ENCODE measurements at regions of chr2 and their contacts with region 1.

Region 1: DNA sequence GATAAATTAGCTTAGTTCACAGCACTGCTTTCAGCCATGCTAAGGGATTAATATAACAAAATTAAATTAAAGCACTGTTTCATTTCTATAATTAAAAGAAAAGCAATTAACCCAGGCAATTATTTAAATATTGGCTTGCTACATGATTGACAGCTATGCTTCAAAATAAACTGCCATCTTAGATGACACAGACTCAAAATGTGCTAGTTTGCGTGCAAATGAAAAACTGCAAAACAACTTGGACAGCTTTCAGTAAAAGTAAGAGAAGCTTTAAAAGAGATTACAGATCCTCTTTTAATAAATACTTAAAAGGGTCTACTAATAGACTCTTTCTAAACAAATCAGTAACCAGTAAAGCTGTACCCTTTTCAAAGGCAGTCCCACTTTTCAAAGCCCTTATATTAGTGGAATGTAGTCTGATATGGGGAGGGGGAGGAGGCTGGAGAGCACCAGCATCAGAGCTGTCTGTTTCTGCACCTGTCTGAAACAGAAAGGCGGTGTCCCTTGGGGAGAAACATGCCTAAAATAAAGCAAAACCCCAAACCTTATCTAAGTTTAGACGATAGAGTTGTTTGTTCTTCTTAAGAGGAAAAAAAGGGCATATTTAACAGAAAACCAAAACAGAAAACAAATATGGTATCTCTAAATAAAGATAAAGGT is 20.8 kb downstream of the EIF2AK3 start:
- DNase-seq: peak; percentile 68
- ATAC-seq: peak; percentile 87
- H3K4me3 ChIP-seq: no peak overlapping the region
- H3K27ac ChIP-seq: peak overlapping the region; percentile 66
- H3K4me1 ChIP-seq: peaks cover 51% of the 10 kb centered on the region
- H3K27me3 ChIP-seq: no peaks in the 10 kb centered on the region
- CTCF ChIP-seq: no peak
- EP300 ChIP-seq: peak in 1 of 2 experiments; percentile 99; a peak in 3 of 4 replicates
- POLR2A ChIP-seq: no peak
- RAD21 ChIP-seq: no peak

Region 2: DNA sequence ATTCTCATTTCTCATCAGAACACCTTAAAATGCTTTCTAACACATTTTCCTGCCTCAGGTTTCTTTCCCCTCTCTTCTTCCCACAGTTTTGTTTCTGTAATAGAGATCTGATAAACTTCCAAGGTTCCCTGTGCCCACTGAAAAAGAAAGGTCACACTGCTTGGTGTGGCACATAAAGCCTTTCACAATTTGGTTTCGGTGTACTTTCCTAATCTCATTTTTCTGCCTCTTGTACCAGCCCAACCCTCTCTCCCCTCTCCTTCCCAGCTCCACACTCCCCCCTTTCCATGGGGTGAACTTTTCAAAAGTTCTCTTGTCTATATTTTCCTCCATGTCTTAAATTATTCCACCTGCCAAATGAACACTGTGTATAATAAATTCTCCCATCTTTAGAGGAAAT is 13.5 kb after region 1 on chr2:
- CTCF ChIA-PET with region 1: interaction called, 36 read pairs
- POLR2A ChIA-PET with region 1: interaction called, 62 read pairs
- RAD21 ChIA-PET with region 1: interaction called, 27 read pairs
- SMC1A ChIA-PET with region 1: interaction called, 231 read pairs
- in situ Hi-C with region 1: no loop called
- intact Hi-C with region 1: no loop called
- DNase-seq: no peak
- ATAC-seq: no peak
- H3K4me3 ChIP-seq: no peak overlapping the region
- H3K27ac ChIP-seq: no peak overlapping the region
- H3K4me1 ChIP-seq: peaks cover 32% of the 10 kb centered on the region
- H3K27me3 ChIP-seq: no peaks in the 10 kb centered on the region
- CTCF ChIP-seq: no peak
- EP300 ChIP-seq: no peak
- POLR2A ChIP-seq: no peak
- RAD21 ChIP-seq: no peak

Region 3: DNA sequence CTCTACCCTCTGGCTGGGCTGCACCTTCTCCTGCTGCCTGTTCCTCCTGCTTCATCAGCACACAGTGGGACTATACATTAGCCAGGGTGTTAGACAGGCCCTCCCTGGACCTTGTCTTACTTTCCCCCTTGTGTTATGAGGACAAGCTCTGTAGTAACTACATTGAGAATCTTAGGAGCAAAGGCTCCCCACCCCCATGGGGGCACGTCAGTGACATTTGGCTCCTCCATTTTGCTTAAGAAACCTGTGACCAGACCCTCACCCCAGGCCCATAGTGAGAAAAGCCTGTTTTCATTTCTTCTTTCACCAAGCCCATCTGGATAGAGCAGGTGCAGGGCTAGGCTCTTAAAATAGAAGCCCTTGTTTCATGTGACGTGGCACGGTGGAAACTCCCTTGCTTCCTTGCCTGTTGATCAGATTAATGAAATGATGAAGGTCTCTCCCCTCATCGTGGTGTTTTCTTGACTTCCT is 231.7 kb after region 1 on chr2:
- CTCF ChIA-PET with region 1: no interaction called
- POLR2A ChIA-PET with region 1: no interaction called
- RAD21 ChIA-PET with region 1: no interaction called
- SMC1A ChIA-PET with region 1: no interaction called
- in situ Hi-C with region 1: loop called (anchors 5 kb)
- intact Hi-C with region 1: no loop called
- DNase-seq: no peak
- ATAC-seq: no peak
- H3K4me3 ChIP-seq: no peak overlapping the region
- H3K27ac ChIP-seq: peak overlapping the region; percentile 65
- H3K4me1 ChIP-seq: no peaks in the 10 kb centered on the region
- H3K27me3 ChIP-seq: no peaks in the 10 kb centered on the region
- CTCF ChIP-seq: no peak
- EP300 ChIP-seq: no peak
- POLR2A ChIP-seq: no peak
- RAD21 ChIP-seq: no peak

Measured in GM12878 (cell line).